ENCODE measurements at regions of chr14 and their contacts with region 1.

Region 1: DNA sequence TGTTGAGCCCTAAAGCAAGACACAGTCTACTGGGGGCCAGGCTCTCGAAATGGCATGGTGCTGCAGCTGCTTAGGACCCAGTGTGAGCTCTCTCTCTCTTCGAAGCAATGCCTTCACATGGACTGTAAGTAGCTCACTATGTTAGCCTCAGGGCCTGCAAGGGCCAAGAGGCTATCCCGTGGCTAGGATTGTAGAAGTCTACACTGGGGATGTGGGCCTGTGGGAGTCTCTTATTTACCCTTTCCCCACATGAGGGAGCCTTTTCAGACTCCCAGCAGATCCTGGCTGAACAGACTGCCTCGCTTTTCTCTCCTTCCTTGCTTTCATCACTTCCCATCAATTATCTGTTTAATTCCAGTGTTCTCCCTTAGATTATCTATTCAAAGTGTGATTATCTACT is 101.4 kb downstream of the GPR65 start:
- DNase-seq: no peak
- H3K4me3 ChIP-seq: no peak overlapping the region
- H3K27ac ChIP-seq: no peak overlapping the region
- H3K27me3 ChIP-seq: no peaks in the 10 kb centered on the region
- CTCF ChIP-seq: no peak

Region 2: DNA sequence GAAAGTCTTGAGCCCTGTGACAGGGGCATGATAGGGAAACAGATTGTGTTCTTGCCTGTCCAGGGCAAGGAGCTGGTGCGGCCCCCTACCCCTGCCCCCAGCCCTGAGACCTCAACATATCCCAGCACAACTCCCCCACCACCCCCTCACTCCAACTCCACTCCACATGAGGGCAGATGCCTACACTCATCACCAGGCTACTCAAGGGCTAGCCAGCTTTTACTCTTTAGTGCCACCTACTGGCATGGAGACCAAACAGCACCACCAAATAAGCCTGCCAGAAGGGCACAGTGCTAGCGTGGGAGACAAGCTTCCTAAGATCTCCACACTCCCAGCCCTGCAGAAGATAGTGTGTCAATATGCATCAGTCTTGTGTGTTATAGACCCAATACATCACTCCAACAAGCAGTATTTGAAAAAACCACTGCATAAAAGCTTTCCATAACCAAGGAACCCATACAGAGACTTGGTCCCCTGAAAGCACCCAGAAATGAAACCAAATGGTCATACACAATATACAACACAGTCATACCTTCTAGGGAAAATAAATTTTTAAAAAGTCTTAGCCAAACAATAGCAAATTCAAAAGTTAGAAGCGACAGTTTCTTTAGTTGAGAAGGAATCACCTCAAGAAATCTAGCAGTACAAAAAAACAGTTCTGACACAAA is 62.3 kb after region 1 on chr14:
- CTCF ChIA-PET with region 1: interaction called, 12 read pairs
- POLR2A ChIA-PET with region 1: no interaction called
- DNase-seq: no peak
- H3K4me3 ChIP-seq: no peak overlapping the region
- H3K27ac ChIP-seq: no peak overlapping the region
- H3K27me3 ChIP-seq: no peaks in the 10 kb centered on the region
- CTCF ChIP-seq: peak; percentile 63